Dorsolateral prefrontal cortex (tissue), 120 donors: ENCODE measurements at regions of chr22 and their contacts with region 1.

Region 1: GRCh38 chr22:20279662-20280134 is 11.6 kb upstream of the RTN4R start:
- DNase-seq: no peak
- H3K4me3 ChIP-seq: no peak overlapping the region
- H3K27ac ChIP-seq: peak overlapping the region in 1 of 59 donors; percentile 48
- H3K27me3 ChIP-seq: no peaks in the 10 kb centered on the region
- CTCF ChIP-seq: no peak

Region 2: DNA sequence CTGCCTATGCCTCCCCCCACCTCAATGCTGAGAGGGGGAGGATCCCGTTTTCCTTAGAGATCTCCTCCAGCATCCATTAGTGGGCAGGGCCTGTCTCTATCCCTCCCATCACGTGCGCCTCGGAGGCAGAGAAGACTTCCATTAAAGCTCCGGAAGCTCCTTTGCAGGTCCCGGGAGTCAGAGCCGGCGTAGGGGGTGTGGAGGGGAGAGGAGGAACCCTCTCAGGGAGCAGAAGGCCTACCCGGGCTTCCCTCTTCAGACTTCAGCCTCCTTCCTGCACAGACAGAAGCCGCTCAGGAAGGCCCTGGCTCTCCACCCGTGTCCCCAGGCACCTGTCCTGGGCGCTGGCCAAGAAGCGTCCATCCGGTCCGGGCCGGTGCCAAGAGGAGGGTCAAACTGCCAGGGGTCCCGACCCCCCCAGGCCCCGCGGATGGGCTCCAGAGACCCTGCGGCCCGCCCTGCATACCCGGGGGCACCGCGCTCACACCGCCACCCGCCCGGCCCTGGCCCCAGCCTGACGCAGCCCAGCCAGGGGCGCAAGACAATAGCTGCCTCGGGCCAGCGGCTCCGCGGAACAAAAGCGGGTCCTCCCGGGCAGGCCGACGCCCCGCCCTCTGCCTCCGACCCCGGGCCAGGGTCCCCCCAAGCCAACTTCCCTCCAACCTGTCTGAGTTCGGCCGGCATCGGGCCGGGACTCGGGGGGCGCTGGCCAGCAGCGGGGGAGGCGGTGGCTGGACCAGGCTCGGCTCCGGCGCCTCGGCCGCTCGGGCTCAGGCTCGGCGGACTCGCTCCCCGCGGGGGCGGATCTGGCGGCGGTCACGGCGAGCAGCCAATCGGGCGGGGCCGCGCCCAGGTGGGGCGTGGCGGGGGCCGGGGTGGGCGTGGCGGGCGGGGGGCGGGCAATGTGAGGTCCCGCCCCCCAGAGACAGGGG is 293.0 kb before region 1 on chr22:
- intact Hi-C with region 1: loop called in 1 of 2 experiments (anchors 10 kb)
- DNase-seq: peak in 7 of 10 donors; percentile 56 to 82 (median 67)
- H3K4me3 ChIP-seq: peak overlapping the region; percentile 47 to 90 (median 75)
- H3K27ac ChIP-seq: peak overlapping the region in 52 of 59 donors; percentile 30 to 90 (median 70)
- H3K27me3 ChIP-seq: no peaks in the 10 kb centered on the region
- CTCF ChIP-seq: no peak

Region 3: DNA sequence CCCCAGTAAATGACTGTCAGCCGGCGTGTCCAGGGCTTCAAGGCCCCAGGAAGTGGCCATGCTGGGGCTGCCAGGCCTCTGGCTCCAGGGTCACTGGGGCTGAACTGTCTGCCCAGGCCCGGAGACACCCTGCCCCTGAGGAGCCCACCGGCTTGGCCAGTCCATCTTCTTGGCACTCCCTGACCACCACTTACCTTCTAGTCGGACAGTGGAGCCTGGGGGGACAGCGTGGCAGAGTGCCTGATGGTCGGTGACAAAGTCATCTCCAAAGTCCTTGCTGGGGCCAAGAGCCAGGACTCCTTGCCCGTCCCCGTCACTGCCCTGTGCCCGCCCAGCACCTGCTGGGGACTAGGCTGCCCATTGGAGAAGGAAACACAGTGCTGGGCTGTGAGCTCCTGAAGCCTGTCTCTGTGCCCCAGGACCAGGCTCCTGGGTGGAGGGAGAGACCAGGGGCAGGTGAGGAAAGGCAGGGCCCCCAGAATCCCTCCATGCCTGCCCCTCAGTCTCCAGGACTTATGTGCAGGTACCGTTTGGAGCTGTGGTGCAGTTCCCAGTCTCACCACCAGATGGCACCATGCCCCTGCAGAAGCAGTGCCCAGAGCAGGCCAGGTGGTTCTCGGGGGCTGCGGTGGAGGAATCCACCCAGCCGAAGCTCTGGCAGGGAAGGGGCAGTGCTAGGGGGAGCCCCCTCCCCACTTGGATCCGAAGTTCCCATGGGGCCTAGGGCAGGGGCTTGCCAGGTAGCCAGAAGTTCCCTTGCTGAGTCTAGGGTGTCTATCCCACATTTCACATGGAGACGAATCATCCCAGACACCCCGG is 122.9 kb before region 1 on chr22:
- intact Hi-C with region 1: loop called in 1 of 2 experiments (anchors 1 kb)
- DNase-seq: peak; percentile 85 to 96 (median 92)
- H3K4me3 ChIP-seq: peak overlapping the region in 3 of 59 donors; percentile 16 to 25 (median 16)
- H3K27ac ChIP-seq: peak overlapping the region in 1 of 59 donors; percentile 43
- H3K27me3 ChIP-seq: no peaks in the 10 kb centered on the region
- CTCF ChIP-seq: peak; percentile 97 to 100 (median 99)